Activated CD4-positive, alpha-beta T cell treated with anti-CD3 and anti-CD28 coated beads, Interleukin-2, amount 10 ng/mL, durations not matched to agents 24 days and 14 days (primary cell): ENCODE measurements at regions of chr4 and their contacts with region 1.

Region 1: GRCh38 chr4:75653845-75654503 is 19.2 kb downstream of the G3BP2 start:
- DNase-seq: no peak
- H3K4me3 Mint-ChIP-seq: peak overlapping the region; percentile 76
- H3K27ac Mint-ChIP-seq: peak overlapping the region; percentile 81
- H3K4me1 Mint-ChIP-seq: peaks cover 42% of the 10 kb centered on the region
- H3K27me3 Mint-ChIP-seq: no peaks in the 10 kb centered on the region

Region 2: DNA sequence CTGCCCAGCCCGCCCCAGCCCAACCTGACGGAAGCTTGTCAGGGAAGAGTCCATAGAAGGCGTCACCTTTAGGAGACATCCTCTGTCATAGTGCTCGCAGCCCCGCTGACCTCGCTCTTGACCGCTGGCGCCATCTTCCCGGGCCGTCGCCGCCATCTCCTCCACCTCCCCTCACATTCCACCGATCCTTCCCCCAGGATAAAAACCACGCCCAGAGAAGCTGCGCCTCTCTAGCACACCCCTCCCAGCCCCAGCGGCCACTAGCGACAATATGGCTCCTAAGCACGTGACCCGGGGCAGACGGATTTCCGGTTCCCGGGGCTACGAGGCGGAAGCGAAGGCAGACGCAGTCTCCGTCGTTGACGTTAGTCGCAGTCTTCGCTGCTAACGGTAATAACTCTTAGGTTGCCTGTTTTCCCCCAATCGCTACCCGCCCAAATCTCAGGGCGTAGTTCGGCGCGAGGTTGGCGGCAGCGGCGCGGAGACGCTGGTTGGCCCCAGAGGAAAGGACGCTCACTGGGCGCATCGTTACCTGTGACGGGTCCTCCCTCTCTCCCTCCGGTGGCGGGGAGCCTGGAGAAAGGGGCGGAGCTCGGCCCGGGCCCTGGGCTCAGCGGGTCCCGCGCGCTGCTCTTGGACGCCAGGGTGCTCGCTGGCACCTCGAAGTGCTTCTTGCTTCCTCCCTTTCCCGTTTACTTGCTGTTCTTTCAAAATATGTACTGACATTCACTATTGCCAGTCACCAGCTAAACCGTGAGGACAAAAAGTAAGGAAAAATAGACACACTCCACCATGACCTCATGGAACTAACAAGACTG is 139.6 kb before region 1 on chr4 and contains the starts of genes RCHY1 and THAP6:
- intact Hi-C with region 1: loop called (anchors 5 kb)
- DNase-seq: peak; percentile 98
- H3K4me3 Mint-ChIP-seq: no peak within 1 kb of the TSS
- H3K27ac Mint-ChIP-seq: peak within 1 kb of the TSS; percentile 99
- H3K4me1 Mint-ChIP-seq: peaks cover 29% of the 10 kb centered on the region
- H3K27me3 Mint-ChIP-seq: no peaks in the 10 kb centered on the region
- total RNA-seq, gene RCHY1: 22.4 and 29.4 TPM in 2 replicates
- total RNA-seq, gene THAP6: 16.3 and 22.7 TPM in 2 replicates

Region 3: DNA sequence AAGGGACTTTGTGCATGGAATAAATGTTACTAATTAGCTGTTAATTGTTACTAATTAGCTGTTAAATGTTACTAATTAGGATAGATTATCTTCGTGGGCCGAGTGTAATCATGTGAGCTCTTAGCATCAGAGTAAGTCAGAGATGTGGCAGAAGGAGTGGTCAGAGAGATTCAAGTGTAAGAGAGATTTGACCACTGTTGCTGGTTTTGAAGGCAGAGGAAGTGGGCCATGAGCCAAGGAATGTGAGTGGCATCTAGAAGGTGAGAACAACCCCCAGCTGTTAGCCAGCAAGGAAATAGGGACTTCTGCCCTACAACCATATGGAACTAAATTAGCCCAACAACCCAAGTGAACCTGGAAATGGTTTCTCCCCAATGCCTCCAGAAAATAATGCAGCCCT is 69.9 kb before region 1 on chr4:
- intact Hi-C with region 1: no loop called
- DNase-seq: no peak
- H3K4me3 Mint-ChIP-seq: no peak overlapping the region
- H3K27ac Mint-ChIP-seq: no peak overlapping the region
- H3K4me1 Mint-ChIP-seq: no peaks in the 10 kb centered on the region
- H3K27me3 Mint-ChIP-seq: peaks cover 19% of the 10 kb centered on the region

Region 4: DNA sequence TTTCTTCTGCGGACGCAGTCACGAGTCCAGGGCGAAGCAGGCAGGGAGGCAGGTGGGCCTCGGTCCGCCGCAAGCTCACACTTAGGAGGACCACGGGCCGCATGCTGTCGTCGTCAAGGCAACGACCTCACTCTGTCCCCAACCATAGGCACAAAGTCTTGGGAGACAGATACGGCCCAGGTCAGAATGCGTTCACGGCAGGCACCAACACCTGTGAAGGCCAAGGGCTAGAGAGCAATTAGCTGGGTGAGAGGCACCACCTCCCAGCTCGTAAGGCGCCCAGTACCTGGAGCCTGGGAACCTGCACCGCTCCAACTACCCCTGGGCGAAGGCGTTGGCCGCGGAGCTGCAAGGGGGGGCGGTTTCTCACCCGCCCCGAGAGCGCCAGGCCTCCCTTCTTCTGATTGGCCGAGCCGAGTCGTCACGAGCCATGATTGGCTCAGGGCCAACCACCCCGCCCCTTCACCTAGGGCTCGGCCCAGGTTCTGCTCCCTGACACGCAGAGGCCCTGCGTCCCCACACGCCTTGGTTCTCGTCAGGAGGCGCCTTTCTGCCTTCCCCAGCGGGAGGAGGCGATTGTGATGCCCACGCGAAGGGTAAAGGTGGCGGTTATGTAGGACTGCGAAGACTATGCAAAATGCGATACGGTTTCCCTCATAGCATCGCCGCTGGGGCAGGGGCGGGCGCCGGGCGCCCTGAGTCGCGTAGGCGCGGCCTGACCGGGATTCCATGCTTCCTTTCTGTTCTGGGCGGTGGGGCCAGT is 23.6 kb before region 1 on chr4 and contains the start of gene CDKL2:
- intact Hi-C with region 1: loop called (anchors 1 kb)
- DNase-seq: peak; percentile 97
- H3K4me3 Mint-ChIP-seq: peak within 1 kb of the TSS; percentile 84
- H3K27ac Mint-ChIP-seq: peak within 1 kb of the TSS; percentile 43
- H3K4me1 Mint-ChIP-seq: peaks cover 16% of the 10 kb centered on the region
- H3K27me3 Mint-ChIP-seq: peaks cover 4% of the 10 kb centered on the region
- total RNA-seq, gene CDKL2: 0.36 TPM in 1 of 2 replicates, not detected in the other

Region 5: GRCh38 chr4:75708218-75708691 is 54.3 kb after region 1 on chr4:
- intact Hi-C with region 1: loop called (anchors 1 kb)
- DNase-seq: peak; percentile 87
- H3K4me3 Mint-ChIP-seq: no peak overlapping the region
- H3K27ac Mint-ChIP-seq: peak overlapping the region; percentile 69
- H3K4me1 Mint-ChIP-seq: peaks cover 6% of the 10 kb centered on the region
- H3K27me3 Mint-ChIP-seq: no peaks in the 10 kb centered on the region